Activated CD4-positive, alpha-beta memory T cell treated with anti-CD3 and anti-CD28 coated beads for 36 hours (primary cell): ENCODE measurements at regions of chr11 and their contacts with region 1.

Region 1: DNA sequence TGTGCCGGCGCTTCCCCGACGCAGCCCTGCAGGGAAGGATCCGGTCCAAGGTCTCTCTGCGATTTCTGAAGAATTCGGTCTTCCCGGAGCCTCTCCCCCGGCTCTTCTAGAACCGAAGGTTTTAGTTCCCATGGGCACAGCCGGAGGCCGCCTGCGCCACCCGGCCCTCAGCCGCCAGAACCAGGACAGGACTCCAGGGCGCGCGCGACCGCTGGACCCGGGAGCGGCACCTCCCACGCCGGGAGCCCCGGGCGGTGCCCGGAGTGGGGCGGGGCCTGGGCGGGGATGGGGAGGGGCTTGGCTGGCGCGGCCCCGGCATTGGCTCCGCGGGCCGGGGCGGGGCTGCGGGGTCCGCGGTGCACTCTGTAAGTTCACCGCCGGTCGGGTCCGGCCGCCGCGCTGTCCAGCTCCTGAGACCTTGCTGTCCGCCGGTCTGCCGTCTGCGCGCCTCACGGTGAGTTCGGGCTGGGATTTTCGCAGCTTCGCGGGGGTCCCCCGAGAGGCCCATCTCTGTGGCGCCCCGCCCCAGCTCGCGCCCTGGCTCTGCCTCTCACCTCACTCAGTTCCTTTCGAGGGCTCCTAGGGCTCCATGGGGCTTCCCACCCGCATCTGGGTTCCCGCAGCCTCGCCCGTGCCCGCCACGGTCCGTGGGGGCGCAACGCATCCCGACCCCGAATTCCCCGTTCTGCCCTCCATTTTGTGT is at the start of gene CDC42EP2:
- DNase-seq: peak; percentile 84
- H3K4me3 Mint-ChIP-seq: peak within 1 kb of the TSS; percentile 69
- H3K27ac Mint-ChIP-seq: no peak within 1 kb of the TSS
- H3K4me1 Mint-ChIP-seq: peaks cover 10% of the 10 kb centered on the region
- H3K27me3 Mint-ChIP-seq: peaks cover 10% of the 10 kb centered on the region
- total RNA-seq, gene CDC42EP2: 0.26 TPM in 1 of 2 experiments, not detected in the other

Region 2: DNA sequence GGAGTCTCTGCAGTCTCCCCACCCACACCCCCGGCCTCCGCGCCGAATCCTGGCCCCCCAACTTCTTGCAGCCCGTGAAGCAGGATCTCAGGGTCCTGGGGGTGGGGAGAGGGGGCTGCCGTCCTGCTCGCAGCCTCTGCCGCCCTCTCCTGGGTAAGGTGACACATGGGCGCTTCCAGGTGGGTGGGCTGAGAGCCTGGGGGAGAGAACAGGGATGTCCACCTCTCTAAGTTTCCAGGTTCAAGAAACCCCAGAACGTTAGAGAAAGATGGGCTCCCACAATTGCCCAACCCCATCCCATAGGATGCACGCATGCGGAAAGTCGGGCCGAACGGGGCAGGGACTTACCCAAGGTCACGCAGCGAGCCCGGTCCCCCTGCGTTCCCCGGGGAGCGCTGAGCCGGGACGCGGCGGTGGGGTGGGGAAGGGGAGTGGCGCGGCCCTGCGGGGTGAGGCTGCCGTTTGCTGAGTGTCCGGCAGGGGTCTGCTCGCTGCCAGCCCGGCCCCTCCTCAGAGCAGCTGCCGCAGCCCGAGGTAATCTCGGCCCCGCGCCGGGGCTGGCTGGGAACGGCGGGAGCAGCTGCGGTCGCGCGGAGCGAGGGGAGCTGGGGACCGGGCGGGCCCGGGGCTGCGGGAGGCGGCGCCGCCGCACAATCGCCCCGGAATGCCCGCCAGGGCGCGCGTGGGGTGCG is 133.6 kb before region 1 on chr11:
- CTCF ChIA-PET with region 1: interaction called, 10 read pairs
- POLR2A ChIA-PET with region 1: no interaction called
- intact Hi-C with region 1: no loop called
- DNase-seq: peak; percentile 74
- H3K4me3 Mint-ChIP-seq: peak overlapping the region; percentile 87
- H3K27ac Mint-ChIP-seq: no peak overlapping the region
- H3K4me1 Mint-ChIP-seq: peaks cover 20% of the 10 kb centered on the region
- H3K27me3 Mint-ChIP-seq: no peaks in the 10 kb centered on the region

Region 3: DNA sequence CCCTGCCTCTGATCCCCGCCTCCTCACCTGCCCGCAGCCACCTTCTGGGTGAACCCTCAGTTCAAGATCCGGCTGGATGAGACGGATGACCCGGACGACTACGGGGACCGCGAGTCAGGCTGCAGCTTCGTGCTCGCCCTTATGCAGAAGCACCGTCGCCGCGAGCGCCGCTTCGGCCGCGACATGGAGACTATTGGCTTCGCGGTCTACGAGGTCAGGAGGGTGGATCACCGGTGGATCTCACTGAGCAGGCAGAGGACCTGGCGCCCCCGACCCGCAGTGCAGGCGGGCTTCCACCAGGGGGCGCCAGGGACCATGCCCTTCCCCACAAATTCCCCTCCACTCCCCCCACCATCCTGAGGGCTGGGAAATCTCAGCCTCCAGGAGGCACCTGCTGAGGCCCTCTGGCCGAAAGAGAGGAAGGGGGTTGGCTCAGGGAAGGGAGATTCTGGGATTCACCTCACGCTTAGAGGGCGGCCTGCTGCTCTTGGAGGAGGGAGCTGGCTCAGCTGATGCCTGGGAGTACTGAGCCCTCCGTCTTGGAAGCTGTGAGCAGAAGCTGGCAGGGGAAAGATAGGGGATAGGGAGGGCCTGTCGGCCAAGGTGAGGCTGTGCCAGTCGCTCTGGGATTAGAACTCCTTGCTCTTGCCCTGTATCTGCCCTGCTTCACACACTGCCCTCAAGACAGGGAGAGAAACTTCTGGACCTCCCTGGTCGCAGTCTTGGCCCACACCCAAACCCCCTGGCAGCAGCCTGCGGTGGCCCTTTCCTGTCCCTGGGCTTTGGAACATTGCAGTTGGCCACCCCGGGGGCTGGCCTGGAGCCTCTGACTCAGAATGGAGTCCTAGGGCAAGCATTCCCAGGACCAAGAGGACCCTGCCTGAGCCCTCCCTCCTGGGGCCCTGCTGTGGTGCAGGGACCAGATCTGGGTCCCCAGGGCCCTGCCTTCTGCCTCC is 109.7 kb before region 1 on chr11:
- CTCF ChIA-PET with region 1: interaction called, 51 read pairs
- POLR2A ChIA-PET with region 1: no interaction called
- intact Hi-C with region 1: no loop called
- DNase-seq: peak; percentile 58
- H3K4me3 Mint-ChIP-seq: no peak overlapping the region
- H3K27ac Mint-ChIP-seq: no peak overlapping the region
- H3K4me1 Mint-ChIP-seq: peaks cover 3% of the 10 kb centered on the region
- H3K27me3 Mint-ChIP-seq: no peaks in the 10 kb centered on the region

Region 4: DNA sequence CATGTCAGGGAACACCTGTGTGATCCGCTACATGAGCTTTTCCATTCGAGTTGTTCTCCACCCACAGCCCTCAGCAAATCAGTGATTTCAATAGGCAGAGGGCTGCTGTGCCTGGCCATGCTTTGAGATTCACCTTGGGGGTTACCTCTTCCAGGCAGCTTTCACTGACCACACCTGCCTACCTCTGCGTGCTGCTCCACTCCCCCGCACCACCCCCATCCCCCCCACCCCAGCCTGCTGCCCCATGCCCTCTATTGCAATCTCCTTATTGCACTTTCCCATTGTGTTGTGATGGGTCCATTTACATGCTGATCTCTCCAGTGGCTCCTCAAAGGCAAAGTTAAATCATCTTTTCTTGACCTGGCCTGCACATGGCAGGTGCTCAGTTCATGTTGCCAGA is 70.9 kb before region 1 on chr11:
- CTCF ChIA-PET with region 1: interaction called, 11 read pairs
- POLR2A ChIA-PET with region 1: no interaction called
- intact Hi-C with region 1: no loop called
- DNase-seq: no peak
- H3K4me3 Mint-ChIP-seq: no peak overlapping the region
- H3K27ac Mint-ChIP-seq: no peak overlapping the region
- H3K4me1 Mint-ChIP-seq: no peaks in the 10 kb centered on the region
- H3K27me3 Mint-ChIP-seq: no peaks in the 10 kb centered on the region

Region 5: GRCh38 chr11:65261591-65262380 is 52.9 kb before region 1 on chr11 and contains the start of gene POLA2:
- CTCF ChIA-PET with region 1: interaction called, 17 read pairs
- POLR2A ChIA-PET with region 1: interaction called, 19 read pairs
- intact Hi-C with region 1: no loop called
- DNase-seq: peak; percentile 98
- H3K4me3 Mint-ChIP-seq: peak within 1 kb of the TSS; percentile 94
- H3K27ac Mint-ChIP-seq: peak within 1 kb of the TSS; percentile 94
- H3K4me1 Mint-ChIP-seq: peaks cover 36% of the 10 kb centered on the region
- H3K27me3 Mint-ChIP-seq: no peaks in the 10 kb centered on the region
- total RNA-seq, gene POLA2: 62.9 to 66.9 TPM

Region 6: DNA sequence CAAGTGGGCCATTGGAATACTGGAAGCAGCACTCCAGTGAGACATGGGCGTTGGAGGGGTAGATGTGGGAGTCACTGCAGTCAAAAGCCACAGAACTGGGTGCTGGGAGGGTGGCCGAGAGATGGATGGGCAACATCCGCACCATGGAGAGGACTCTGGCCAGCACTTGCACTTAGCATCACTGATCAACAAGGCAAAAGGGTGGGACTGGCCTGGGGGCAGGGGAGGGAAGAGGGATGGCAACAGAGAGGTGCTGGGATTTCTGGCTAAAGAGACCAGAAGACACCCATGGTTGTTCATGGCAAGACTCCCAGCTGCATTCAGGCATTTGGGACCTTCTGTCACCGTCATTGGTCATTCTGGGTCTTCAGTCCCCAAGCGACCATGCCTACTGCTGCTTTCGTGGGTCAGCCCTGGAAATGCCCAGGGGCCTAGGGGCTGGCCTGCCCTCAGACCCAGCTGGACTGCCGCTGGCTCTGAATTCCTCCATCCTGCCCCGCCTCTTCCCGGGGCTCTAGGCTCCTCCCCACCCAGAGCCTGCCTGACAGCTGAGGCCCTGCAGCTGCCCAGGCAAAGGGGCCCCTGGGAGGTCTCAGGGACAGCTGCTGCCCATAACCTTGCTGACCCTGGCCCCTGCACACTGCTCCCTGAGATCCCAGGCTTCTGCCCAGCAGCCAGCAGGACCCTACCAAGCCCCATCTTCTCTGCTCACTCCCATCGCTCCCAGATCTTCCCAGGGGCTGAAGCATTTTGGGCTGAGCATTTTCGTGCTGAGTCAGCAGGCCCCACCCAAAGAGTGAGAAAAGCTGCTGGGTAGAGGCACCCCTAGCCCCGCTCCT is 12.9 kb before region 1 on chr11:
- CTCF ChIA-PET with region 1: interaction called, 43 read pairs
- POLR2A ChIA-PET with region 1: no interaction called
- intact Hi-C with region 1: no loop called
- DNase-seq: no peak
- H3K4me3 Mint-ChIP-seq: no peak overlapping the region
- H3K27ac Mint-ChIP-seq: no peak overlapping the region
- H3K4me1 Mint-ChIP-seq: no peaks in the 10 kb centered on the region
- H3K27me3 Mint-ChIP-seq: no peaks in the 10 kb centered on the region